WTC11 (cell line): ENCODE measurements at regions of chr6 and their contacts with region 1.

Region 1: GRCh38 chr6:134822920-134823709 is 126.8 kb downstream of the ALDH8A1 start:
- DNase-seq: peak; percentile 57
- ATAC-seq: peak; percentile 99
- H3K4me3 Mint-ChIP-seq: no peak overlapping the region
- H3K27ac Mint-ChIP-seq: no peak overlapping the region
- H3K4me1 Mint-ChIP-seq: peaks cover 10% of the 10 kb centered on the region
- H3K27me3 Mint-ChIP-seq: no peaks in the 10 kb centered on the region
- CTCF ChIP-seq: peak; percentile 41; the same call in 1 of the 2 replicates

Region 2: GRCh38 chr6:134174672-134175198 is 648.4 kb before region 1 on chr6:
- CTCF ChIA-PET with region 1: interaction called, 14 read pairs
- POLR2A ChIA-PET with region 1: no interaction called
- DNase-seq: peak; percentile 91
- ATAC-seq: peak; percentile 66
- H3K4me3 Mint-ChIP-seq: peak overlapping the region; percentile 94
- H3K27ac Mint-ChIP-seq: peak overlapping the region; percentile 86
- H3K4me1 Mint-ChIP-seq: peaks cover 40% of the 10 kb centered on the region
- H3K27me3 Mint-ChIP-seq: peaks cover 21% of the 10 kb centered on the region
- CTCF ChIP-seq: no peak

Region 3: DNA sequence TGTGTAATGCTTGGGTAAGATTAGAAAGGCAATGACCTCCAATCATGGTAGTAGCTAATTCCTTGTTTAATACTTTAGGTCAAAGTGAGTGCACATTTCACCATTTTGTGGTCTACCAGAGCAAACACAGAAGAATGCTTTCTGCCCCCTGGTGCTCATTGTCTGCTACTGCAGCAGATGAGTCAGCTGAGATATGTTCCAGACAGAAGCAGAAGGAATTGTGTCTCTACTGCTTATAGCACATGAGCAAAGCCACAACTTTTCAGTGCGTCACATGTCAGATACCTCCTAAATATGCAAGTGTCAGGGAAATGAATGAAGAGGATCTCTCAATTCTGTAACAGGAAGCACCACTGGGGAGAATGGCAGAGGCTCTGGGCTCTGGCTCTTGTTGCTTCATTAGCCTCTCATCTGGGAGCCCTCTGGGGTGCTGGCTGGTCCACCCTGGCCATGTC is 182.1 kb before region 1 on chr6:
- CTCF ChIA-PET with region 1: interaction called, 14 read pairs
- POLR2A ChIA-PET with region 1: no interaction called
- DNase-seq: peak; percentile 75
- ATAC-seq: peak; percentile 79
- H3K4me3 Mint-ChIP-seq: no peak overlapping the region
- H3K27ac Mint-ChIP-seq: no peak overlapping the region
- H3K4me1 Mint-ChIP-seq: peaks cover 21% of the 10 kb centered on the region
- H3K27me3 Mint-ChIP-seq: no peaks in the 10 kb centered on the region
- CTCF ChIP-seq: peak; percentile 84

Region 4: GRCh38 chr6:134651519-134651918 is 171.6 kb before region 1 on chr6:
- CTCF ChIA-PET with region 1: no interaction called
- POLR2A ChIA-PET with region 1: no interaction called
- DNase-seq: no peak
- ATAC-seq: no peak
- H3K4me3 Mint-ChIP-seq: no peak overlapping the region
- H3K27ac Mint-ChIP-seq: no peak overlapping the region
- H3K4me1 Mint-ChIP-seq: no peaks in the 10 kb centered on the region
- H3K27me3 Mint-ChIP-seq: no peaks in the 10 kb centered on the region
- CTCF ChIP-seq: no peak

Region 5: DNA sequence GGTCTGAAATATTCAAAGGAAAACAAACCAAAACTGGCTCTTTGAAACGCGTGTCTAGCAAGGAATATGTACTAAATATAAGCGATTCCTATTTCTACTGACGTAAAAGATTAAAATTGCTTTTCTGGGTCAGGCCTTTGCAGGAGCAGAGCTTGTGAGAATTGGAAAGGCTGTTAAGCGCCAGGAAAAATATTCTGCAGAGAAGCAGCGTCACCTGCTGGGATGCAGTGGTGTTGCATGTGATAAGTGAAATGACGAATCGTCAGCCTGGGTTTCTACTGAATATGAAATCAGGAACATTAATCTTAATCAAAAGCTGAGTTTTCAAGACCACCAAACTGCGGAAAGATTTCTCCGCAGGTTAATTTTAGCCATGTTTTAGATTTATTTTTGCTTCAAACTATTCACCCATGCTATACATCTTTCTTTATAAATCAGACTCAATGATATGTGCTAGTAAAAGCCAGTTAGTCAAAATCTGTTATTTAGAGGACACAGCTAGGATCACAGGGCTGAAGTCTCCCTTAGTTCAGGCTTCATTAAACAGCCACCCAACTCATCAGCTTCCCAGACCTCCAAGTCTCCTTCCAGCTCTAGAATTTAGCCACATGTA is 59.4 kb after region 1 on chr6:
- CTCF ChIA-PET with region 1: interaction called, 15 read pairs
- POLR2A ChIA-PET with region 1: no interaction called
- DNase-seq: peak; percentile 73
- ATAC-seq: peak; percentile 77
- H3K4me3 Mint-ChIP-seq: no peak overlapping the region
- H3K27ac Mint-ChIP-seq: no peak overlapping the region
- H3K4me1 Mint-ChIP-seq: no peaks in the 10 kb centered on the region
- H3K27me3 Mint-ChIP-seq: no peaks in the 10 kb centered on the region; the same call in 1 of the 2 replicates
- CTCF ChIP-seq: peak; percentile 86

Region 6: GRCh38 chr6:134938896-134939295 is 115.8 kb after region 1 on chr6:
- CTCF ChIA-PET with region 1: interaction called, 11 read pairs
- POLR2A ChIA-PET with region 1: no interaction called
- DNase-seq: no peak
- ATAC-seq: peak; percentile 25; the same call in 1 of the 2 replicates
- H3K4me3 Mint-ChIP-seq: no peak overlapping the region
- H3K27ac Mint-ChIP-seq: no peak overlapping the region
- H3K4me1 Mint-ChIP-seq: peaks cover 5% of the 10 kb centered on the region; the same call in 1 of the 2 replicates
- H3K27me3 Mint-ChIP-seq: no peaks in the 10 kb centered on the region
- CTCF ChIP-seq: no peak

Region 7: GRCh38 chr6:135243871-135244796 is 421.0 kb after region 1 on chr6:
- CTCF ChIA-PET with region 1: no interaction called
- POLR2A ChIA-PET with region 1: no interaction called
- DNase-seq: no peak
- ATAC-seq: peak; percentile 26; the same call in 1 of the 2 replicates
- H3K4me3 Mint-ChIP-seq: no peak overlapping the region
- H3K27ac Mint-ChIP-seq: peak overlapping the region; percentile 34
- H3K4me1 Mint-ChIP-seq: peaks cover 29% of the 10 kb centered on the region
- H3K27me3 Mint-ChIP-seq: no peaks in the 10 kb centered on the region
- CTCF ChIP-seq: no peak